ENCODE measurements at regions of chr19 and their contacts with region 1.

Region 1: GRCh38 chr19:19860756-19861390 is 4.8 kb upstream of the ZNF253 start:
- DNase-seq: peak; percentile 87 to 93
- H3K4me3 ChIP-seq: peak overlapping the region; percentile 82 to 98 (median 94)
- H3K27ac ChIP-seq: peak overlapping the region; percentile 95
- H3K4me1 ChIP-seq: peaks cover 0 to 5% (median 0%) of the 10 kb centered on the region in 4 experiments; a peak in 3 of 7 replicates
- H3K27me3 ChIP-seq: no peaks in the 10 kb centered on the region
- CTCF ChIP-seq: no peak
- EP300 ChIP-seq: no peak
- POLR2A ChIP-seq: peak; percentile 96 to 99
- RAD21 ChIP-seq: no peak

Region 2: DNA sequence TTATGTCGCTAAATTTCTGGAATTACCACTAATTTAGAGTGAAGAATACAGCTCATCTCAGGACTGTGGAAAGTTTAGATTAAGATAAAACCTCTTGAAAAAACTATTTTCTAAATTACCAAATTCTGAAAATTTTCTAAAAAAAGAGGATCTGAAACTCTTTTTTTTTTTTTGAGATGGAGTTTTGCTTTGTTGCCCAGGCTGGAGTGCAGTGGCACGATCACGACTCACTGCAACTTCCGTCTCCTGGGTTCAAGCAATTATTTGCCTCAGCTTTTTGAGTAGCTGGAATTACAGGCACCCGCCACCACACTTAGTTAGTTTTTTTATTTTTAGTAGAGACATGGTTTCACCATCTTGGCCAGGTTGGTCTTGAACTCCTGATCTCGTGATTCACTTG is 11.8 kb before region 1 on chr19:
- CTCF ChIA-PET with region 1: interaction called, 4 read pairs
- POLR2A ChIA-PET with region 1: interaction called, 77 read pairs
- DNase-seq: no peak
- H3K4me3 ChIP-seq: no peak overlapping the region
- H3K27ac ChIP-seq: no peak overlapping the region
- H3K4me1 ChIP-seq: no peaks in the 10 kb centered on the region
- H3K27me3 ChIP-seq: no peaks in the 10 kb centered on the region
- CTCF ChIP-seq: no peak
- EP300 ChIP-seq: no peak
- POLR2A ChIP-seq: no peak
- RAD21 ChIP-seq: no peak

Region 3: GRCh38 chr19:19873381-19873780 is 12.5 kb after region 1 on chr19:
- CTCF ChIA-PET with region 1: no interaction called
- POLR2A ChIA-PET with region 1: interaction called, 77 read pairs
- DNase-seq: no peak
- H3K4me3 ChIP-seq: no peak overlapping the region
- H3K27ac ChIP-seq: no peak overlapping the region
- H3K4me1 ChIP-seq: peaks cover 0 to 5% (median 1%) of the 10 kb centered on the region in 4 experiments; a peak in 2 of 7 replicates
- H3K27me3 ChIP-seq: no peaks in the 10 kb centered on the region
- CTCF ChIP-seq: no peak
- EP300 ChIP-seq: no peak
- POLR2A ChIP-seq: no peak
- RAD21 ChIP-seq: no peak